CD4-positive, alpha-beta memory T cell (primary cell): ENCODE measurements at regions of chr6 and their contacts with region 1.

Region 1: GRCh38 chr6:137641474-137642077 is 147.4 kb upstream of the OLIG3 start:
- DNase-seq: peak; percentile 58 to 66 (median 64)
- H3K4me3 ChIP-seq: no peak overlapping the region
- H3K4me3 Mint-ChIP-seq: no peak overlapping the region
- H3K27ac ChIP-seq: no peak overlapping the region
- H3K27ac Mint-ChIP-seq: no peak overlapping the region
- H3K4me1 ChIP-seq: peaks cover 10% of the 10 kb centered on the region
- H3K4me1 Mint-ChIP-seq: peaks cover 6 to 15% (median 12%) of the 10 kb centered on the region in 4 donors
- H3K27me3 ChIP-seq: no peaks in the 10 kb centered on the region
- H3K27me3 Mint-ChIP-seq: peaks cover 4 to 5% of the 10 kb centered on the region in 2 donors

Region 2: DNA sequence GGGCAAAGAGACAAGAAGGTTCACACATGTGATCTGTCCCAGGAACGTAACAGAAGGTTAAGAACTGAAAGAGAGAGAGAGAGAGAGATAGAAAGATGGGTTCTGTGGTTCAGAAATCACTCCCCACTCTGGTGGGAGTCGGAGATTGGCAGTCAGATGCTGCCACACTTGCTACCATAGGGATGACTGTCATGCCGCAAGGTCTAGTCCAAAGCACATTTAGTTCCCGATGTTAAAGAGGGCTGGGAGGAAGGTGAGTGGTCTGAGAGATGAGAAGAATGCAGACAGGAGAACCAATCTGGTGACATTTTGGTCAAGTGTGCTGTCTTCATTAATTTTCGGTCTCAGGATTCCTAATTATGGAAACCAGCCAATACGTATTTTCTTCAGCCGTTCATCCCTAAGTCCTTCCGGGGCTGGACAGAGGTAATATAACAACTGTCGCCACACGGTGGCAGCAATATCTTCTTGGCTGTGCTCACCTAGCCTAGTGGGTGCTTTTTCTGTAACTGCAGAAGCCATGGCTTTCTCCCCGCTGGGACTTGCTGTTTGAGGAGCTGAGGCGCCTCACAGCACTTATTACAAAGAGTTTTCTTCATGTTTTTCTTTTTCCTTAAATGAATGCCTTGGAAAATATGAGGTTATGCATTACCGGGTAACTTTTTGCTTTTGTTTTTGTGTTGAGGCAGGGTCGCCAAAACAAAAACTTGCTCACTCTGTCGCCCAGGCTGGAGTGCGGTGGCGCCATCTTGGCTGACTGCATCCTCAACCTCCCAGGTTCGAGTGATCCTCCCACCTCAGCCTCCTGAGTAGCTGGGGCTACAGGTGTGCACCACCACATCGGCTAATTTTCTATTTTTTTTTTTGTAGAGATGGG is 673.5 kb before region 1 on chr6:
- CTCF ChIA-PET with region 1: no interaction called
- POLR2A ChIA-PET with region 1: no interaction called
- intact Hi-C with region 1: loop called (anchors 1 kb)
- DNase-seq: peak in 4 of 5 donors; percentile 38 to 51 (median 46)
- H3K4me3 ChIP-seq: no peak overlapping the region
- H3K4me3 Mint-ChIP-seq: peak overlapping the region in 1 of 8 donors; percentile 17
- H3K27ac ChIP-seq: no peak overlapping the region
- H3K27ac Mint-ChIP-seq: peak overlapping the region in 1 of 7 donors; percentile 68
- H3K4me1 ChIP-seq: no peaks in the 10 kb centered on the region
- H3K4me1 Mint-ChIP-seq: peaks cover 0 to 10% (median 6%) of the 10 kb centered on the region in 4 donors
- H3K27me3 ChIP-seq: no peaks in the 10 kb centered on the region
- H3K27me3 Mint-ChIP-seq: peaks cover 10 to 32% of the 10 kb centered on the region in 2 donors

Region 3: DNA sequence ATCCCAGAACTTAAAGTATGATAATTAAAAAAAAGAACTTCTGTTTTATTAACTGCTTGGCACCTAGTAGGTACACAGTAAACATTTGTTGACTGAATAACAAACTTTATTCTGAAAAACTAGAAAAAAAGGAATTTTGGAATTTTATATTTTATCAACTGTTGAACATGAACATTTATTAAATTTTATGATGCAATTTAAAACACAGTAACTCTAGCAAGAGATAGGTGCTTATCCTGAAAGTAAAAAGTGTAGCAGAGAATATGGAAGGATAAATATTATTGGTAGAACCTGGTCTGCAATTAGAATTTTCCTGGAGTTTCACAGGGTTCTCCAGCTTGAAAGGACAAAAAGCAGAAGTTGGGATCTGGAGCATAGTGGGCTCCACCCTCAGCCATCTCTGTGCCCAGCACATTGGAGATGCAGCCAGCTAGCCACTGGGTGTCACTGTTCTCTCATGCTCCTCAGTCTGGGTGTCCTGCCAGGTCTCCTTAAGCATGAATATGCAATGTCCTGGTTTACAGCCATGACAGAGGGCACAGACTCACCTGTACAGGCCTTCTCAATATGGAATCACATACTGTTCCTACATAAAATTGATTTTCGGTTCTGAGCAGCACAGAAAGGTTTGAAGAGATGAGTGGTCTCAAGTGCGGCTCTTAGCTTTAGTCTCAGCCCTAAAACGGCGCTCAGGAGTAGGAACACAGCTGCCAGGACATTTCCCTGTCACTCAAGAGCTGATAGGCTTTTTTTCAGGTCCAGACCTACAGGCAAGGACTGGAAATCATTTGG is 565.1 kb before region 1 on chr6:
- CTCF ChIA-PET with region 1: interaction called, 6 read pairs
- POLR2A ChIA-PET with region 1: no interaction called
- intact Hi-C with region 1: loop called (anchors 1 kb)
- DNase-seq: peak; percentile 38 to 53 (median 47)
- H3K4me3 ChIP-seq: no peak overlapping the region
- H3K4me3 Mint-ChIP-seq: no peak overlapping the region
- H3K27ac ChIP-seq: no peak overlapping the region
- H3K27ac Mint-ChIP-seq: no peak overlapping the region
- H3K4me1 ChIP-seq: no peaks in the 10 kb centered on the region
- H3K4me1 Mint-ChIP-seq: no peaks in the 10 kb centered on the region
- H3K27me3 ChIP-seq: no peaks in the 10 kb centered on the region
- H3K27me3 Mint-ChIP-seq: peaks cover 10 to 18% of the 10 kb centered on the region in 2 donors

Region 4: DNA sequence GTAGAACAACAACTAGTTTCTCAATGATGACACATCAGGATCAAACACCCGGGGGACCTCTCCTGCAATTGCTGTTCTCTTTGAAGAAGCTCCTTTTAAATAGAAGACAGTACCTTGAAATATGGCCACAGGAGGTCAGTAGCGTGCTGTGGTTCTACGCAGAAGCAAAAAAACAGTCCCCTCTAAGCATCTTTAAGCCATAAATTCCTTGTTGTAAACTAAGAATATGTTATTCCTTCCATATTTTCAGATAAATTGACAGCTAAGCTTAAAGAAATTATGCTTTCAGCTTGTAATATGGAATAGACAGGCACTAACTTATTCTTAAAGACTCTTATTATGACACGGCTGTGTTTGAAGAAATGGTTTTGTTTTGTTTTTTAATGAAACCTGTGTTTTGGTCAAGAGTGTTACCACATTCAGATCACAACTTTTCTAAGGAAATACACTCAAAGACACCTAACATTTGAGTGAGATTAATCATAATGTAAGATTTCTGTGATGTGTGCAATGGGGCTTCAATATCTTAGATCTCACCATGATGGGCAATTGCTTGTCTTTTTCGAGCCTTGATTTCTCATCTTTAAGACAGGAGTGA is 547.1 kb before region 1 on chr6:
- CTCF ChIA-PET with region 1: interaction called, 16 read pairs
- POLR2A ChIA-PET with region 1: no interaction called
- intact Hi-C with region 1: loop called (anchors 1 kb)
- DNase-seq: peak; percentile 55 to 59 (median 57)
- H3K4me3 ChIP-seq: no peak overlapping the region
- H3K4me3 Mint-ChIP-seq: peak overlapping the region in 3 of 8 donors; percentile 13 to 42 (median 27)
- H3K27ac ChIP-seq: no peak overlapping the region
- H3K27ac Mint-ChIP-seq: peak overlapping the region in 3 of 7 donors; percentile 42 to 67 (median 61)
- H3K4me1 ChIP-seq: peaks cover 19% of the 10 kb centered on the region
- H3K4me1 Mint-ChIP-seq: peaks cover 12 to 26% (median 15%) of the 10 kb centered on the region in 4 donors
- H3K27me3 ChIP-seq: no peaks in the 10 kb centered on the region
- H3K27me3 Mint-ChIP-seq: peaks cover 3 to 4% of the 10 kb centered on the region in 2 donors

Region 5: DNA sequence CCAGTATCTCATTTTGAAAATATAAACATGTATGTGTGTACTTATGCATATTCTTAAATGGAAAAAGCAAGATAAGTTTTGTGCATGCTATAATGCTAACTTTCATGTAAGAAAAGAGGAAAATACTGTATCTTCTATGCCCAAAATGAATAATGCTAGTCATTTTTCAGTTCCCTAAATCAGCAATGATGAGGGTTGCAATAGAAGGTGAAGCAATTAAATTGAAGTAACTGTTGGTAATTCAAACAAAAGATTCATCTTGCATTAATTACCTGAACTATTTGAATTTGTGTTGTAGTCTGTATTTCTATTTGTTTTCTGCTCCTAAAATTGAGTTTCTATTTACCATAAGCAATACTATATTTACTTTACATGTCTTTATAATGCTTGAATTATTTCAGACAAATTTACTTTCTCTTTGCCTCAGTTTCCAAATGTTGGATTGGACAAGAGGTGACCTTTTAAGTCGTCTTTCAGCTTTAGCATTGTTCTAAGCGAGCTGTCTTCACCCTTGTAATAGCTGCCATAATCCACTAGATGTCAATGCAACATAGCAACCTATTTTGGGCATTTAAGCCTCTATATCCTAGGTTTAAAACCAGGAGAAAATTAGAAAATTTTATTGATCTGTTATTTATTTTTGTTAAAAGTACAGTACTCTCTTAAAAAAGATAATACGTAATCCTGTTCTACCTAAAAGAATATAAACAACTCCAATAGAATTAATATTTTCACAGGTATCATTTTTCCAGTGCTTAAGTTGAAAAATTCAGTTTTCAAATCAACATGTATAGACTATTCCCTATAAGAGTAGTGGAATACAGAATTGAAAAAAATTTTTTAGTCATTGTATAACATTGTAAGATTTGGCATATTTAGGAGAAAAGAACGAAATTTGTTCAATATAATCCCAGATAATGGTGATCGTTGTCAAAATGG is 370.1 kb before region 1 on chr6:
- CTCF ChIA-PET with region 1: interaction called, 7 read pairs
- POLR2A ChIA-PET with region 1: no interaction called
- intact Hi-C with region 1: loop called (anchors 1 kb)
- DNase-seq: peak in 4 of 5 donors; percentile 26 to 36 (median 33)
- H3K4me3 ChIP-seq: no peak overlapping the region
- H3K4me3 Mint-ChIP-seq: no peak overlapping the region
- H3K27ac ChIP-seq: no peak overlapping the region
- H3K27ac Mint-ChIP-seq: no peak overlapping the region
- H3K4me1 ChIP-seq: peaks cover 6% of the 10 kb centered on the region
- H3K4me1 Mint-ChIP-seq: peaks cover 2 to 19% (median 12%) of the 10 kb centered on the region in 4 donors
- H3K27me3 ChIP-seq: no peaks in the 10 kb centered on the region
- H3K27me3 Mint-ChIP-seq: no peaks in the 10 kb centered on the region

Region 6: GRCh38 chr6:137475103-137475502 is 166.5 kb before region 1 on chr6:
- CTCF ChIA-PET with region 1: interaction called, 4 read pairs
- POLR2A ChIA-PET with region 1: no interaction called
- intact Hi-C with region 1: loop called (anchors 1 kb)
- DNase-seq: no peak
- H3K4me3 ChIP-seq: no peak overlapping the region
- H3K4me3 Mint-ChIP-seq: no peak overlapping the region
- H3K27ac ChIP-seq: no peak overlapping the region
- H3K27ac Mint-ChIP-seq: no peak overlapping the region
- H3K4me1 ChIP-seq: no peaks in the 10 kb centered on the region
- H3K4me1 Mint-ChIP-seq: no peaks in the 10 kb centered on the region
- H3K27me3 ChIP-seq: peaks cover 3% of the 10 kb centered on the region
- H3K27me3 Mint-ChIP-seq: peaks cover 9 to 17% of the 10 kb centered on the region in 2 donors

Region 7: DNA sequence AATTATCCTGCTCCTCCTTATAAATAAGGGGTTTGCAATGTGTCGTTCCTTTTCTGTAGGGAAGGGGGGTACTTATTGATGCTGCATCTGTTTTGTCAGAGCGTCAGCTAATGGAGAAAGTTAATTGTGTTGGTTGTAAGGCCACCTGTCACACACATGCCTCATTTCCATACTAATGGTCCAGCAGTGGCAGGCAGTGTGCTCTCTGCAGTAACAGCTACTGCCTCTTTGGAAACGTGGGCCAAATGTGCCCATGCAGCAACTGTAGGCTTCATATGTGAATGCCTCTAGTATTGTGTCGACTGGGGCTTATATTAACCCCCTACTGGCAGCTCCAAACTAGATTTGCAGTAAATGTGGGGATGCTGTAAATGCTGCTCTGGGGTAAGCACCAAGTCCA is 91.0 kb before region 1 on chr6:
- CTCF ChIA-PET with region 1: no interaction called
- POLR2A ChIA-PET with region 1: no interaction called
- intact Hi-C with region 1: no loop called
- DNase-seq: no peak
- H3K4me3 ChIP-seq: no peak overlapping the region
- H3K4me3 Mint-ChIP-seq: no peak overlapping the region
- H3K27ac ChIP-seq: no peak overlapping the region
- H3K27ac Mint-ChIP-seq: no peak overlapping the region
- H3K4me1 ChIP-seq: no peaks in the 10 kb centered on the region
- H3K4me1 Mint-ChIP-seq: peaks cover 0 to 4% (median under 1%) of the 10 kb centered on the region in 4 donors
- H3K27me3 ChIP-seq: no peaks in the 10 kb centered on the region
- H3K27me3 Mint-ChIP-seq: peaks cover 0 to 2% of the 10 kb centered on the region in 2 donors

Region 8: GRCh38 chr6:137975188-137975940 is 333.8 kb after region 1 on chr6:
- CTCF ChIA-PET with region 1: no interaction called
- POLR2A ChIA-PET with region 1: no interaction called
- intact Hi-C with region 1: loop called (anchors 2 kb)
- DNase-seq: peak; percentile 62 to 71 (median 67)
- H3K4me3 ChIP-seq: no peak overlapping the region
- H3K4me3 Mint-ChIP-seq: peak overlapping the region; percentile 67 to 93 (median 82)
- H3K27ac ChIP-seq: peak overlapping the region; percentile 57
- H3K27ac Mint-ChIP-seq: peak overlapping the region; percentile 87 to 99 (median 97)
- H3K4me1 ChIP-seq: peaks cover 37% of the 10 kb centered on the region
- H3K4me1 Mint-ChIP-seq: peaks cover 30 to 57% (median 34%) of the 10 kb centered on the region in 4 donors
- H3K27me3 ChIP-seq: no peaks in the 10 kb centered on the region
- H3K27me3 Mint-ChIP-seq: no peaks in the 10 kb centered on the region